Calu3 (cell line): ENCODE measurements at regions of chr19 and their contacts with region 1.

Region 1: GRCh38 chr19:40139533-40140287 is 49.0 kb upstream of the ZNF780A start:
- DNase-seq: peak; percentile 14
- H3K4me3 Mint-ChIP-seq: no peak overlapping the region
- H3K27ac Mint-ChIP-seq: no peak overlapping the region
- H3K4me1 Mint-ChIP-seq: no peaks in the 10 kb centered on the region
- H3K27me3 Mint-ChIP-seq: peaks cover 34% of the 10 kb centered on the region
- CTCF ChIP-seq: peak; percentile 74

Region 2: DNA sequence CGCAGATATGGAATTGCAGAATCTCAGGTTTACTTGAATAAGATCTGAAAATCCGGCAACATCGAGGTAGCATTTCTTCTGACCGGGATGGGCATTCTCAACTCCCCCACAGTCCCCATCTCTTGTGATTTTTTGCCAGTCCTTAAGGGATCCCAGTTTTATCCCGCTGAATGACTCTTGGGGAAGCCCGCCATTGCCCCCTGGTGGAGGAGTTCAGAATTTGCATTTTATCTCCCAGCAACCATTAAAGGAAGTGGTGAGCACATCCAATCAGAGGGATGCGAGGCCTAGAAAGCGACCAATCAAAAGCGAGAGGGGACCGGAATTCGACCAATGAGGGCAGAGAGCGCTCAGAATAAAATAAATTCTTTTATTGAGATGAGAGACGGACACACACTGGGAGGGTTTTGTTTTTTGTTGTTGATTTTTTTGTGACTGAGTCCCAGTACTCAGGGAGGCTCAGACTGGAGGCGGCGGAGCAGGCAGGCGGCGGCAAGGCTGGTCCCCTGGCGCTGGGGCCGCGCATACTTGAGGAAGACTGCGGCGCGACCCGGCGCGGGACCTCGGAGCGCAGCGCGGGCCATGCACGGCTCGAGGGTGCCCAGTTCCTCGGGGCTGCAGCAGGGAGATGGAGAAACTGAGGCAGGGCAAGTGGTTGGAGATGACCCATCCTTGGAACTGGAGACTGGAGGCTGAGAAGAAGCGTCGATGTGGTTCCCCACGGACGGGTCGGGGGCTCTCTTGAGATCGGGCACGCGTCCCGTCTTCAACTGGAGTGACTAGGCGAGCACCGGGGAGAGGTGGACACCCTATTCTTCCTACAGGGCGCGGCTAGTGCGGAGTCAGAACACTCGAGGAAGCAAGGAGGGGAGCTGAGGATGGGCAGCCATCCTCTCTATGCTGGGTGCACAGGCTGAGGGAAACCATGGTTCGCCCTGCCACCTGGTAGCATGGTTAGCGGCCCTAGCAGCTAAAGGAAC is 82.4 kb after region 1 on chr19:
- CTCF ChIA-PET with region 1: interaction called, 3 read pairs
- intact Hi-C with region 1: loop called (anchors 1 kb)
- DNase-seq: peak; percentile 82
- H3K4me3 Mint-ChIP-seq: peak overlapping the region; percentile 12
- H3K27ac Mint-ChIP-seq: peak overlapping the region; percentile 82
- H3K4me1 Mint-ChIP-seq: peaks cover 59% of the 10 kb centered on the region
- H3K27me3 Mint-ChIP-seq: peaks cover 32% of the 10 kb centered on the region
- CTCF ChIP-seq: peak; percentile 90

Region 3: DNA sequence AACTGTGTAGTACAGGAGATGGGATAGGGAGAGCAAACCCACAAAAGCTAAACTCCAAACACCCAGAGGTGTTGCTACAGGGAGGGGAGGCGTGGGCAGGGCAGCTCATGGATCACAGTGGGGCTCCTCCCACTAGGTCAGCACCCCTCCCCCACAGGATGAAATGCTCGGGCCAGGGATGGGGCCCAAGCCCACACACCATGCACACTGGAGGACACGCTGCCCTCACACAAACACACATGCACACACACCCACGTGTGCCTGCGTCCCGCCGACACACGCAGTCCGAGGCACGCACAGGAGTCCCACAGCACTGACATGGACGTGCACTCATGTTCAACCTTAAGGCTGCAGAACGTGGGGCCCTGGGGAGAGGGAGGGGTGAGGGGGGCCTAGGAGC is 92.8 kb after region 1 on chr19:
- CTCF ChIA-PET with region 1: no interaction called
- intact Hi-C with region 1: no loop called
- DNase-seq: no peak
- H3K4me3 Mint-ChIP-seq: no peak overlapping the region
- H3K27ac Mint-ChIP-seq: no peak overlapping the region
- H3K4me1 Mint-ChIP-seq: peaks cover 12% of the 10 kb centered on the region
- H3K27me3 Mint-ChIP-seq: peaks cover 10% of the 10 kb centered on the region
- CTCF ChIP-seq: no peak